CD4-positive, alpha-beta memory T cell (primary cell): ENCODE measurements at regions of chr11 and their contacts with region 1.

Region 1: GRCh38 chr11:125141686-125142535 is 22.6 kb upstream of the PKNOX2 start:
- DNase-seq: peak; percentile 40 to 53 (median 44)
- H3K4me3 ChIP-seq: no peak overlapping the region
- H3K4me3 Mint-ChIP-seq: peak overlapping the region in 1 of 8 donors; percentile 38
- H3K27ac ChIP-seq: no peak overlapping the region
- H3K27ac Mint-ChIP-seq: peak overlapping the region in 1 of 7 donors; percentile 12
- H3K4me1 ChIP-seq: peaks cover 5% of the 10 kb centered on the region
- H3K4me1 Mint-ChIP-seq: peaks cover 2 to 7% (median 4%) of the 10 kb centered on the region in 4 donors
- H3K27me3 ChIP-seq: peaks cover 12% of the 10 kb centered on the region
- H3K27me3 Mint-ChIP-seq: peaks cover 24 to 44% of the 10 kb centered on the region in 2 donors

Region 2: DNA sequence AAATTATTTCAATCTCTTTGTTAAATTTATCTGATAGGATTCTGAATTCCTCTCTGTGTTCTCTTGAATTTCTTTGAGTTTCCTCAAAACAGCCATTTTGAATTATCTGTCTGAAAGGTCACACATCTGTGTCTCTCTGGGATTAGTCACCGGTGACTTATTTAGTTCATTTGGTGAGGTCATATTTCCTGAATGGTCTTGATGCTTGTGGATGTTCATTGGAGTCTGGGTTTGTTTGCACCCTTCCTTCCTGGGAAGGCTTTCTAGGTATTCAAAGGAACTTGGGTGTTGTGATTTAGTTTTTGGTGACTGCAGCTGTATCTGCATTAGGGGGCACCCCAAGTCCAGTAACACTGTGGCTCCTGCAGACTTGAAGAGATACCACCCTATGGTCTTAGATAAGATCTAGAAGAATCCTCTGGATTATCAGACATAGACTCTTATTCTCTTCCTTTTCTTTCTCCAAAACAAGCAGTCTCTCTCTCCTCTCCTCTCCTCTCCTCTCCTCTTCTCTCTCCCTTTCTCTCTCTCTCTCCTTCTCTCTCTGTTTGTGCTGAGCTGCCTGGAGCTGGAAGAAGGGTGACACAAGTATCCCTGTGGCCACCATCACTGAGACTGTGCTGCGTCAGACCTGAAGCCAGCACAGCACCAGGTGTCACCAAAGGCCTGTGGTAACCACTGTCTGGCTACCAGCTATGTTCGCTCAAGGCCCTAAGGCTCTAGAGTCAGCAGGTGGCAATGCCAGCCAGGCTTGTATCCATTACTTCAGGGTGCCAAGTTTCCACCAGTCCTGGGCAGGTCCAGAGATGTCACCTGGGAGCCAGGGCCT is 226.2 kb before region 1 on chr11:
- CTCF ChIA-PET with region 1: interaction called, 4 read pairs
- POLR2A ChIA-PET with region 1: no interaction called
- intact Hi-C with region 1: loop called (anchors 1 kb)
- DNase-seq: no peak
- H3K4me3 ChIP-seq: no peak overlapping the region
- H3K4me3 Mint-ChIP-seq: no peak overlapping the region
- H3K27ac ChIP-seq: no peak overlapping the region
- H3K27ac Mint-ChIP-seq: no peak overlapping the region
- H3K4me1 ChIP-seq: no peaks in the 10 kb centered on the region
- H3K4me1 Mint-ChIP-seq: peaks cover 0 to 4% (median 2%) of the 10 kb centered on the region in 4 donors
- H3K27me3 ChIP-seq: no peaks in the 10 kb centered on the region
- H3K27me3 Mint-ChIP-seq: peaks cover 5 to 9% of the 10 kb centered on the region in 2 donors

Region 3: GRCh38 chr11:125091247-125091876 is 50.5 kb before region 1 on chr11:
- CTCF ChIA-PET with region 1: interaction called, 48 read pairs
- POLR2A ChIA-PET with region 1: no interaction called
- intact Hi-C with region 1: loop called (anchors 1 kb)
- DNase-seq: no peak
- H3K4me3 ChIP-seq: no peak overlapping the region
- H3K4me3 Mint-ChIP-seq: no peak overlapping the region
- H3K27ac ChIP-seq: no peak overlapping the region
- H3K27ac Mint-ChIP-seq: no peak overlapping the region
- H3K4me1 ChIP-seq: no peaks in the 10 kb centered on the region
- H3K4me1 Mint-ChIP-seq: no peaks in the 10 kb centered on the region
- H3K27me3 ChIP-seq: no peaks in the 10 kb centered on the region
- H3K27me3 Mint-ChIP-seq: no peaks in the 10 kb centered on the region

Region 4: GRCh38 chr11:125111343-125112207 is 30.3 kb before region 1 on chr11 and contains the start of gene TMEM218:
- CTCF ChIA-PET with region 1: interaction called, 16 read pairs
- POLR2A ChIA-PET with region 1: no interaction called
- intact Hi-C with region 1: no loop called
- DNase-seq: peak; percentile 94 to 97 (median 96)
- H3K4me3 ChIP-seq: peak within 1 kb of the TSS; percentile 72 to 89
- H3K4me3 Mint-ChIP-seq: peak within 1 kb of the TSS; percentile 92 to 100 (median 98)
- H3K27ac ChIP-seq: peak within 1 kb of the TSS; percentile 68
- H3K27ac Mint-ChIP-seq: peak within 1 kb of the TSS; percentile 74 to 99 (median 97)
- H3K4me1 ChIP-seq: peaks cover 18% of the 10 kb centered on the region
- H3K4me1 Mint-ChIP-seq: peaks cover 4 to 25% (median 18%) of the 10 kb centered on the region in 4 donors
- H3K27me3 ChIP-seq: no peaks in the 10 kb centered on the region
- H3K27me3 Mint-ChIP-seq: no peaks in the 10 kb centered on the region
- total RNA-seq, gene TMEM218: 15.1 to 16.6 TPM

Region 5: GRCh38 chr11:125157953-125158680 is 16.2 kb after region 1 on chr11:
- CTCF ChIA-PET with region 1: interaction called, 15 read pairs
- POLR2A ChIA-PET with region 1: no interaction called
- intact Hi-C with region 1: no loop called
- DNase-seq: no peak
- H3K4me3 ChIP-seq: no peak overlapping the region
- H3K4me3 Mint-ChIP-seq: no peak overlapping the region
- H3K27ac ChIP-seq: no peak overlapping the region
- H3K27ac Mint-ChIP-seq: no peak overlapping the region
- H3K4me1 ChIP-seq: no peaks in the 10 kb centered on the region
- H3K4me1 Mint-ChIP-seq: no peaks in the 10 kb centered on the region
- H3K27me3 ChIP-seq: no peaks in the 10 kb centered on the region
- H3K27me3 Mint-ChIP-seq: peaks cover 34 to 35% of the 10 kb centered on the region in 2 donors

Region 6: GRCh38 chr11:126146433-126147192 is 1004.7 kb after region 1 on chr11:
- CTCF ChIA-PET with region 1: no interaction called
- POLR2A ChIA-PET with region 1: no interaction called
- intact Hi-C with region 1: no loop called
- DNase-seq: no peak
- H3K4me3 ChIP-seq: no peak overlapping the region
- H3K4me3 Mint-ChIP-seq: no peak overlapping the region
- H3K27ac ChIP-seq: no peak overlapping the region
- H3K27ac Mint-ChIP-seq: no peak overlapping the region
- H3K4me1 ChIP-seq: no peaks in the 10 kb centered on the region
- H3K4me1 Mint-ChIP-seq: no peaks in the 10 kb centered on the region
- H3K27me3 ChIP-seq: no peaks in the 10 kb centered on the region
- H3K27me3 Mint-ChIP-seq: peaks cover 0 to 5% of the 10 kb centered on the region in 2 donors